Common myeloid progenitor, CD34-positive (primary cell): ENCODE measurements at regions of chr10 and their contacts with region 1.

Region 1: GRCh38 chr10:97714048-97714371 is 480 bp downstream of the MARVELD1 start:
- DNase-seq: peak; percentile 60 to 83 (median 69)
- H3K4me3 ChIP-seq: peak overlapping the region; percentile 34 to 80 (median 64)
- H3K27ac ChIP-seq: peak overlapping the region in 1 of 2 experiments; percentile 64
- H3K4me1 ChIP-seq: peaks cover 0 to 38% (median 30%) of the 10 kb centered on the region in 4 experiments
- H3K27me3 ChIP-seq: no peaks in the 10 kb centered on the region

Region 2: GRCh38 chr10:97701438-97702069 is 12.5 kb before region 1 on chr10:
- CTCF ChIA-PET with region 1: interaction called, 623 read pairs
- POLR2A ChIA-PET with region 1: no interaction called
- DNase-seq: peak; percentile 68 to 82 (median 74)
- H3K4me3 ChIP-seq: no peak overlapping the region
- H3K27ac ChIP-seq: no peak overlapping the region
- H3K4me1 ChIP-seq: no peaks in the 10 kb centered on the region
- H3K27me3 ChIP-seq: peaks cover 0 to 4% (median 0%) of the 10 kb centered on the region in 5 experiments

Region 3: DNA sequence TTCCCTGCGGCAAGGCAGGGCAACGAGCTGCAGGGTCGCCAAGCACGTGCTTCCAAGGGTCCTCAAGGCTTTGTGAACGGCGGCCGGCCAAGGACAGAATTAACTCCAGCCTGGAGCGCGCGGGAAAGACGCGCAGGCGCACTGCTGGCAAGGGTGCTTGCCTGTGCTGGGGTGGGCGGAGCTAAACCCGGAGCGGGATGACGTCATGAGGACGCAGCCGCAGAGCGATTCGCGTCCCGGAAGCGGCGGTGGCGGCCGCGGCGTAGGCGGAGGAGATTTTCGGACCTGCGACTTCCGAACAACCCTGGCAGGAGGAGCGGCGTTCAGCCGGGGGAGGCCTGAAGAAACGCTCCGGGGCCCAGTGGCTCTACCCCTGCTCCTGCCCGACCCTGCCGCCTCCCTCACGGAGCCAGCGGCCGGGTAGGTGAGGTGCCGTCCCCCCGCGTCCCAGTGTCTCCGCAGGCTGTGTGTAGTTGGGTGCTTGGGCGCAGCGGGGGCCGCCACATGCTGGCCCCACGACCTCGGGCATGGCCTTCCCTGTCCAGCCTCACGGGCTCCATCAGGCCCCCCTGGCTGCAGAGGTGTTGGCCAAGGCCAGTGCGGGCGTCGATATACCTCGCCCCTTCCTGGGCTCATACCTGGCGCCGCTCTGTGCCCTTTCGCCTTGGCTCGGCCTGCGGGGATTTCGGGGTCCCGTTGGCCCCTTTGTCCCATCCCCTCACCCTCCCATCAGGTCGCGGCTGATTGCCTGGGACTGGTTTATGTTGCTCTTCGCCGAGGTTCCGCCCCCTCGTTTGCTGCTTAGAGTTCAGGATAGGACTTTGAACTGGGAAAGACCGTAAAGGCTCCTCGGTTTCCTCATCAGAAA is 23.1 kb after region 1 on chr10 and contains the start of gene ZFYVE27:
- CTCF ChIA-PET with region 1: interaction called, 623 read pairs
- POLR2A ChIA-PET with region 1: interaction called, 4 read pairs
- DNase-seq: peak; percentile 93 to 94 (median 94)
- H3K4me3 ChIP-seq: peak within 1 kb of the TSS; percentile 57 to 96 (median 89)
- H3K27ac ChIP-seq: peak within 1 kb of the TSS; percentile 70 to 91
- H3K4me1 ChIP-seq: peaks cover 7 to 19% (median 15%) of the 10 kb centered on the region in 4 experiments
- H3K27me3 ChIP-seq: no peaks in the 10 kb centered on the region

Region 4: GRCh38 chr10:97743169-97743943 is 29.3 kb after region 1 on chr10:
- CTCF ChIA-PET with region 1: interaction called, 11 read pairs
- POLR2A ChIA-PET with region 1: no interaction called
- DNase-seq: no peak
- H3K4me3 ChIP-seq: no peak overlapping the region
- H3K27ac ChIP-seq: no peak overlapping the region
- H3K4me1 ChIP-seq: peaks cover 0 to 4% (median 2%) of the 10 kb centered on the region in 4 experiments
- H3K27me3 ChIP-seq: no peaks in the 10 kb centered on the region